Left colon (tissue), 2 donors: ENCODE measurements at regions of chr7 and their contacts with region 1.

Region 1: GRCh38 chr7:64951250-64951848 is 39.5 kb downstream of the ZNF117 start:
- DNase-seq: no peak
- ATAC-seq: peak; percentile 68

Region 2: GRCh38 chr7:65307651-65308299 is 356.4 kb after region 1 on chr7:
- intact Hi-C with region 1: loop called in 1 of 2 experiments (anchors 5 kb)
- DNase-seq: peak in 1 of 2 donors; percentile 18
- ATAC-seq: peak; percentile 41